H1 (cell line): ENCODE measurements at regions of chr12 and their contacts with region 1.

Region 1: DNA sequence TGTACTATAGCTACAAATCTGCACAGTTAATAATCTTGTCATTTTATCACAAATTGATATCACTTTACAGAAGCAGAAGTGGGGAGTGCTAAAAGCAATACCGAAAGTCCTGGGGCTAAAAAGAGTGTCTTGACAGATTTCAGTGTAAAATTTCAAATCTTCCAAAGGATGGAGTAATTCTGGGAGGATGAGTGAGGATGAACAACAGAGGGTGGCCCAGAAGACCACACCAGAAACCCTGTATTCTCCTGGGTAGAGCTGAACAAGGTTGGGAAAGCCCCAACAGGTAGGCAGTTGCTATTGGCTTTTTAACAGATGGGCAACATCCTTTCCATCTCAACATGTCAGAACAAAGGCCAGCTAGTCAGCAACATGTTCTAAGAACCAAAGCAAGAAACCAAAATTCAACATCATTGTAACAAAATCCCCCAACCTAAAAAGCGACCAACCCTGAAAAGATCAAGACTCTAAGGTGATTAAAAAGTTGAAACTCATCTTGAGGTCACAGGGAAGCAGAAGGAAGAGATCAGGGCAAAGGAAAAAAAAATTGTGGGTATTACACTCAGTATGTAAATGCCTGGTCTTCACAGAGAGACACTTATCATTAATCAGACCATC is 38.8 kb downstream of the CBX5 start:
- DNase-seq: no peak
- H3K4me3 ChIP-seq: no peak overlapping the region
- H3K27ac ChIP-seq: no peak overlapping the region
- H3K4me1 ChIP-seq: no peaks in the 10 kb centered on the region
- H3K27me3 ChIP-seq: no peaks in the 10 kb centered on the region
- CTCF ChIP-seq: no peak
- EP300 ChIP-seq: no peak
- POLR2A ChIP-seq: no peak
- RAD21 ChIP-seq: no peak

Region 2: GRCh38 chr12:54229624-54230212 is 11.4 kb before region 1 on chr12:
- CTCF ChIA-PET with region 1: interaction called, 10 read pairs
- POLR2A ChIA-PET with region 1: interaction called, 12 read pairs
- DNase-seq: no peak
- H3K4me3 ChIP-seq: no peak overlapping the region
- H3K27ac ChIP-seq: 0 out of 2 replicates have a peak overlapping the region, but pooled peaks have one; percentile 0
- H3K4me1 ChIP-seq: no peaks in the 10 kb centered on the region
- H3K27me3 ChIP-seq: no peaks in the 10 kb centered on the region
- CTCF ChIP-seq: no peak
- EP300 ChIP-seq: no peak
- POLR2A ChIP-seq: no peak
- RAD21 ChIP-seq: no peak

Region 3: GRCh38 chr12:54251667-54252284 is 10.7 kb after region 1 on chr12:
- CTCF ChIA-PET with region 1: interaction called, 68 read pairs
- POLR2A ChIA-PET with region 1: interaction called, 7 read pairs
- DNase-seq: no peak
- H3K4me3 ChIP-seq: no peak overlapping the region
- H3K27ac ChIP-seq: no peak overlapping the region
- H3K4me1 ChIP-seq: no peaks in the 10 kb centered on the region
- H3K27me3 ChIP-seq: no peaks in the 10 kb centered on the region
- CTCF ChIP-seq: peak in 2 of 3 experiments; percentile 41 to 55; a peak in 2 of 4 replicates
- EP300 ChIP-seq: no peak
- POLR2A ChIP-seq: no peak
- RAD21 ChIP-seq: peak; percentile 56 to 62

Region 4: GRCh38 chr12:54259194-54260011 is 18.3 kb after region 1 on chr12:
- CTCF ChIA-PET with region 1: interaction called, 68 read pairs
- POLR2A ChIA-PET with region 1: interaction called, 21 read pairs
- DNase-seq: peak; percentile 89
- H3K4me3 ChIP-seq: peak overlapping the region; percentile 35 to 56 (median 46)
- H3K27ac ChIP-seq: peak overlapping the region; percentile 97
- H3K4me1 ChIP-seq: peaks cover 3 to 23% (median 15%) of the 10 kb centered on the region in 4 experiments
- H3K27me3 ChIP-seq: no peaks in the 10 kb centered on the region
- CTCF ChIP-seq: no peak
- EP300 ChIP-seq: peak; percentile 59 to 84; a peak in 2 of 3 replicates
- POLR2A ChIP-seq: peak; percentile 84 to 85
- RAD21 ChIP-seq: 0 out of 4 replicates have a peak, but pooled peaks of 1 of the 2 experiments have one; percentile 10

Region 5: GRCh38 chr12:54535474-54535873 is 294.4 kb after region 1 on chr12:
- CTCF ChIA-PET with region 1: no interaction called
- POLR2A ChIA-PET with region 1: no interaction called
- DNase-seq: no peak
- H3K4me3 ChIP-seq: no peak overlapping the region
- H3K27ac ChIP-seq: no peak overlapping the region
- H3K4me1 ChIP-seq: peaks cover 0 to under 1% (median 0%) of the 10 kb centered on the region in 4 experiments; a peak in 1 of 7 replicates
- H3K27me3 ChIP-seq: no peaks in the 10 kb centered on the region; a peak in 3 of 7 replicates
- CTCF ChIP-seq: no peak
- EP300 ChIP-seq: no peak
- POLR2A ChIP-seq: no peak
- RAD21 ChIP-seq: no peak